ENCODE measurements at regions of chr12 and their contacts with region 1.

Region 1: GRCh38 chr12:27635349-27635972 is 60.8 kb upstream of the REP15 start:
- DNase-seq: peak in 1 of 2 experiments; percentile 59
- H3K4me3 ChIP-seq: no peak overlapping the region
- H3K27ac ChIP-seq: no peak overlapping the region
- H3K4me1 ChIP-seq: no peaks in the 10 kb centered on the region
- H3K27me3 ChIP-seq: no peaks in the 10 kb centered on the region
- CTCF ChIP-seq: peak; percentile 77

Region 2: DNA sequence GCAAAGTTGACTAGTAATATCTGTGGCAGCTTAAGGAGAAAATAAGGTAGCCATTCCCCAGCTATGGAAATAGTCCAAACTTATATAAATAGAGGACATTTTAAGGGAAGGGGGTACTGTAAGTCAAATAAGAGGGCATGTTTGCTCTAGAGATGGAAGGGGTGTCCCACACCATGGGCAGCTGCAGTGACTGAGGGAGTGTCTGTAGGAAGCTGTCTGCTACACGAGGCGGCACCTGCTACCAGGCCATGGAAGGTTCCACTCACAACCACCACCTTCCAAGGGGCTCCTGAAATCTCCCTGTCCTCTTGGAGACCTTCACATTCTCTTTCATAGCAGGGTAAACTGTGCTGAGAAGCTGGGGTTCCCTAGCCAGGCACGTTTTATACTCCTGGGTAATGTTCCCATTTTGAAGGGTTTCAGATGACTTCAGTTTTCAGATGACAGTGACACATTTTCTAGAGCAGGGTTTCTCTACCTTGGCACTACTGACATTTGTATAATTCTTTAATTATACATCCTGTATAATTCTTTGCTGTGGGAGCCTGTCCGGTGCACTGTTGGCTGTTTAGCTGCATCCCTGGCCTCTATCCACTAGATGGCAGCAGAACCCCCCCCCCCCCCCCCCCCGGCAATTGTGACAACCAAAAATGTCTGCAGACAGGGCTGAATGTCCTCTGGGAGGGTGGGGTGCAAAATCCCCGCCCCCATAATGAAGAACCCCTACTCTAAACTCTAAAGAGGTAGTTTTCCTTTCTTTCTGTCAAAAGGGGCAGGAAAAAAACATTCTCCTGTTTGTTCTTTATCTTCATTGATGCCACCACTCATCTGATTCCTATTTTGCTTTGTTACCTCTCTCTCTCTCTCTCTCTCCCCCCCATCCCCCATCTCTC is 200.5 kb before region 1 on chr12:
- CTCF ChIA-PET with region 1: no interaction called
- POLR2A ChIA-PET with region 1: no interaction called
- intact Hi-C with region 1: loop called (anchors 1 kb)
- DNase-seq: peak in 1 of 2 experiments; percentile 8
- H3K4me3 ChIP-seq: no peak overlapping the region
- H3K27ac ChIP-seq: no peak overlapping the region
- H3K4me1 ChIP-seq: 0 out of 2 replicates have a peak, but pooled peaks cover 3% of the 10 kb centered on the region
- H3K27me3 ChIP-seq: no peaks in the 10 kb centered on the region
- CTCF ChIP-seq: peak; percentile 77